ENCODE measurements at regions of chr2 and their contacts with region 1.

Region 1: DNA sequence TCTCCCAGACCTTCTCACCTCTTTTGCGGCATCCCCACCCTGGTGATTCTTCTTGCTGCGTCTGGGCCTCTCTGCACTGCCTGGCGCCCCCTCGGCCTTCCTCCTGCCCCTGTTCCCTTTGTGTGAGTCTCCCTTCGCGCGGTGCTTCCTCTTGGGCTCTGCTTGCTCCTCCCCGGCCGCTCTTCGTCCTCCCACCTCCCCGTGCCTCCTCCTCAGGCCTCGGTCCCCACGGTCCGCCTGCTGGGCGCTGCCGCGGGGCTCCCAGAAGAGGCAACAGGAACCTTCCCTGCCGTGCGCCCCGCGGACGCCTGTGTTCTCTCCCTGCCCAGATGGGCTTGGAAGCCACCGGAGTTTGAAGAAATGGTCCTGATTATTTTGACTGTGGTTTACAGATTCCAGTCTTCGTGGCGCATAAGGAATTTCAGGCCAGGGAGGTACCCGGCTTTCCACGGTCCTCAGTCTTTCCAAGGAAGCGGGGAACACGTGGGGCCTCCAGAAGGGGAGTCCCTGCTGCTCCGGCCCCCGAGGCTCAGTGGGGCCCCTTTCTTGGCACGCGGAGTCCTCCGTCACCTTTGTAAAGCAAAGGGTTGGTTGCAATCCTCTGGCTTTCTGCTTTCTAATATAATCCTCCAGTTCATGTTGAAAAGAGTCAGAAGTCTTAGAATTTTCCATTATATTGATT is 13.1 kb downstream of the RNU2-63P start:
- DNase-seq: peak; percentile 50
- H3K4me3 Mint-ChIP-seq: peak overlapping the region; percentile 15
- H3K27ac Mint-ChIP-seq: no peak overlapping the region
- H3K4me1 Mint-ChIP-seq: peaks cover 6% of the 10 kb centered on the region
- H3K27me3 Mint-ChIP-seq: no peaks in the 10 kb centered on the region

Region 2: DNA sequence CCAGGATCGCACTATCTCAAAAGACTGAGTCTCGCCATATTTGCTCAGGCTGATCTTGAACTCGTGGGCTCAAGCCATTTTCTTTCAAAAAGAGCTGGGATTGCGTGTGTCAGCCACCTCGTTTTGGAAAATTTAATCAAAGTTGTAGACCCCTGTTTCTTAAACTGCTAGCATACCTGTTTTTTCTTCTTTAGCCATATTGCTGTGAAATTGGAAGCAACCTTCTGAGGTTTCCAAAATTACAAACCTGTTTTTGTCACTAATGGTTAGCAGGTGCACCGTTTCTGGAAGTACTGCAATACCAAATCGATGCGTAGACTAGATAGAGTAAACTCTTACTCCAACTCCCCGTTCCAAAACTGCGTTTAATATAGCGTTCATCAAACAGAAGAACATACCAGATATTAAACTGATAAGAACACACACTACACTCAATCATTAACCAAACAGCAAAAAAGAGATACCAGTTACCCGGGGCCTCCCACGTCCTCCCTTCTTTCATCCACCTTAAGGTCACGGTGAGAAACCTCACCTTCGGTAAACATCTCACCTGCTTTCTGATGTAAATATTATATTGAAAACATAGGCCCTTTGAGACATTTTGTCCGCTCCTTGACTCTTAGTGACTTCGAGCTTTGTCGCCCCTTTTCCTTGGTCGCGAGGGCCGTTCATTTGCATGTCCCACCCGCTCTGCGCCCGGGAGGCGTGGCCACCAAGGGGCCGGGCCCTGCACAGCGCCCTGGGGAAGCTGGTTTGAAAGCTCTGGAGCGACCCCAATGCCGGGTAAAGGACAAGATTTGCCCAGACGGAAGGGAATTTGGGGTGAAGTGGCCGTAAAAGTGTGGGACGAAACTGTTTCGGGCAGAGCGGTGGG is 13.1 kb after region 1 on chr2 and contains the start of gene RNU2-63P:
- intact Hi-C with region 1: loop called (anchors 1 kb)
- DNase-seq: peak; percentile 94
- H3K4me3 Mint-ChIP-seq: peak within 1 kb of the TSS; percentile 96
- H3K27ac Mint-ChIP-seq: peak within 1 kb of the TSS; percentile 97
- H3K4me1 Mint-ChIP-seq: peaks cover 14% of the 10 kb centered on the region
- H3K27me3 Mint-ChIP-seq: no peaks in the 10 kb centered on the region
- total RNA-seq, gene RNU2-63P: 34.0 and 34.9 TPM in 2 replicates